Activated naive CD4-positive, alpha-beta T cell treated with anti-CD3 and anti-CD28 coated beads for 36 hours (primary cell): ENCODE measurements at regions of chr2 and their contacts with region 1.

Region 1: DNA sequence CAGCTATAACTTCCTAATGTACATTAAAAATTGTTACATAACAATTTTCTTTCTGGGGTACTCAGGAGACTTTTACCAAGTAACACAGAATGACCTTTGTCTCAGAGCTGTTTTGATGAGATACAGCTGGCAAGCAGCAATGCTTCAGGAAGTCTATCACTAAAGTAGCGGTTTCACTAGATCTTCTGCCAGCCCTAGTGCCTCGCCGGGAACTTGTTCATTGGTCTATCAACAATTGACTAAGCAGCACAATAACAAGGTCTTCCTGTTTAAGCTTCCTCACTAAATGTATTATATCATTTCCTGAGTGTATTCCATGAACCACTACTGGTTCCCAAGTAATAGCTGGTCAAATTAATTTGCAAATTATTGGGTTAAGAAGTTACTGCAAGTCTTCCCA is 69.2 kb downstream of the TRIP12 start:
- DNase-seq: peak; percentile 66
- H3K4me3 Mint-ChIP-seq: no peak overlapping the region
- H3K27ac Mint-ChIP-seq: peak overlapping the region; percentile 0
- H3K4me1 Mint-ChIP-seq: peaks cover 60% of the 10 kb centered on the region
- H3K27me3 Mint-ChIP-seq: no peaks in the 10 kb centered on the region

Region 2: DNA sequence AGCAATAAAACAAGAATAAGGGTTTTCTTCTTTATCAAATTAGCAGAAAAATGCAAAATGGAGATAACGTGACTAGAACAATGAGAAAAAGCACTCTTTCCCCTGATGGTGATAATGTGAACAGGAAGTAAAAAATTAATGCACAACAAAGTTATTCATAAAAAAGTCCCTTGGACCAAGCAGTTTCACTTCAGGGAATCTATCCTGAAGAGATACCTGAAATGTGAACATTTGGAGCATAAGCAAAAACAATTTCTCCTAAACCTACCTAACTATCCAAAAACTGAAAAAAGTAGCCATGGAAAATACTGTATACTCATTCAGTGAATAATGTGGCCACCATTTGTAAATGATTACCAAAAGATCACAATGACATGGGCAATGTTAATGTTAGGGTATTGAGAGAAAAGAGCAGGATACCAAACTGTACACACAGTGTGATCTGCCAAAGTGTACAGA is 20.6 kb after region 1 on chr2:
- CTCF ChIA-PET with region 1: no interaction called
- intact Hi-C with region 1: loop called (anchors 2 kb)
- DNase-seq: no peak
- H3K4me3 Mint-ChIP-seq: no peak overlapping the region
- H3K27ac Mint-ChIP-seq: peak overlapping the region; percentile 21
- H3K4me1 Mint-ChIP-seq: peaks cover 49% of the 10 kb centered on the region
- H3K27me3 Mint-ChIP-seq: no peaks in the 10 kb centered on the region